ENCODE measurements at regions of chr10 and their contacts with region 1.

Region 1: GRCh38 chr10:79463578-79464496 is 18.4 kb upstream of the ZCCHC24 start:
- DNase-seq: no peak
- H3K4me3 ChIP-seq: no peak overlapping the region
- H3K27ac ChIP-seq: peak overlapping the region in 1 of 2 donors; percentile 76
- H3K4me1 ChIP-seq: no peaks in the 10 kb centered on the region
- H3K27me3 ChIP-seq: no peaks in the 10 kb centered on the region
- CTCF ChIP-seq: no peak
- POLR2A ChIP-seq: no peak

Region 2: DNA sequence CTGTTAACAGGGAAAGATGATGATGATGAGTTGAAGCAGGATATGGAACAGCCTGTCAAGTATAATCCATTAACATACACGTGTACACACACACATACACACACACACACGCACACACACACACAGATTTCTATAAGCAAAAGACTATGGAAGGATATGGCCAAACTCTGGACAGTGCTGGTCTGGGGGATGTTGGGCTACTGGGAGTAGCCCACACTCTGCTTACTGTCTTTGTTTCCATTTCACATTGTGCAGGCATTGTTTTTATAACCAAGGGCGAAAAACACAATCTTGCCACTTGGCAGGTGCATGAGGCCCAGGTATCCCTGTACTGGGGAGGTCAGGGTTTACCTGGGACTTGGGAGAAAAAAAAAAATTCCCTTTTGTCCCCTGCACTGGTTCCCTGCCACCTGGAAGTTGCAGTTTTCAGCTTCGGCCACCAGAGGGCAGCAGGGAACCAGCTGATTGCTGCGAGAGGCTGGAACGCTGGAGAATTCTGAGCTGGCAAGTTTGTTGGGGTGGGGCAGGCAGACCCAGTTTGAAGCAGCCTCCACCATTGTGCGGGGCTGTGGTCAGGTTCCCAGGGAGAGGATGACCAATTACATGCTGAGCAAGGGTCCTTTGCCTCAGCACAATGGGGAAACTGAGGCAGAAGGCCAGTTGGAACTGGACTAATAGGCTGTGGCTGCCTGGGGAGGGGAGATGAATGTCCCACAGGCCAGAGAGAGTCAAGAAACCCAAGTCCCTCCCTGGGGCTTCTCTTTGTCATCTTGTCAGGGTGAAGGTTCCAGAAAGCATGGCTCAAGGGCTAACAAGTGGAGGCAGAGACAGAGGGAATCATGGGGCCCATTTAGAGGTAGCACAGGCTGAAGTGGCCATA is 89.3 kb before region 1 on chr10:
- intact Hi-C with region 1: loop called (anchors 10 kb)
- DNase-seq: peak; percentile 73 to 88
- H3K4me3 ChIP-seq: no peak overlapping the region
- H3K27ac ChIP-seq: no peak overlapping the region
- H3K4me1 ChIP-seq: no peaks in the 10 kb centered on the region
- H3K27me3 ChIP-seq: no peaks in the 10 kb centered on the region
- CTCF ChIP-seq: peak; percentile 90 to 98 (median 94)
- POLR2A ChIP-seq: no peak

Measured in breast epithelium (tissue), 4 donors.